Activated T-helper 1 cell treated with anti-CD3 and anti-CD28 coated beads, Interleukin-12 subunit alpha, Interleukin-12 subunit beta, Interleukin-2, Interleukin-4 antibody, amounts not matched to agents 30 ng/mL and 10 ng/mL and 1 ng/mL, durations not matched to agents 14 hours and 24 hours and 36 hours (primary cell): ENCODE measurements at regions of chr15 and their contacts with region 1.

Region 1: DNA sequence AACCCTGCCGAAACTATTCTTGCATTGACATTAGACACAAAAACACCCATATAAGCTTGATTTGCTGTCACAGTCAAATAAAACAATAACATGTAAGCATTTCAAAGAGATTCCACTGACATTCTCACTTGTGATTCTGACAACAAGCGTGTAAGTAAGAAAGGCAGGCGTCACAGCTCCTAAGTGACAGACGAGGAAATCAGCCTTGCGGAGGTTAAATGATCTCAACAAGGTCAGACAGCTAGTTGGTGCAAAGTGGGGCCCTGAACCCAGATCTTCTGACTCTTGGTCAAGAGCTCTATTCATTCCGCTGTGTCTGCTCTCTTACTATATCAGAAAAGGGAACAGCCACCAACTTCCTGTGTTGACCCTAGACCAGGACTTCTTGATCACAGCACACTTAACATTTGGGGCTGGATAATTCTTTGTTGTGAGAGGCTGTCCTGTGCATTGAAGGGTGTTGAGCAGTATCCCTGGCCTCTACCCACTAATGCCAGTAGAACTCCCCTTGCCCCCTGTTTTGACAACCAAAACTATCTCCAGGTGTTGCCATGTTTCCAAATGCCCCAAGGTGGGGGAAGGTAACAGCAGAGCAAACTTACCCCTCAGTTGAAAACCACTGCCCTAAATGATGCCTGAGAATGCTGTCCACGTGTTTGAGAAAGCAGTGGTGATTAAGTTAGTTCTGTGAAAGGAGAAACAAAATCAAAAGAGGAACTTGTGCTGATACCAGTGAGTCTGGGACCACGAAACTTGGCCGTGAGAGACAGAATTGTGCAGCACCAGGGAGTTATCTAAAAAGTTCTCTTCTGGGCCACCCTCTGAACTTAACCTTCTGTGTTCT is 86.1 kb downstream of the LIPC start:
- DNase-seq: no peak
- H3K4me3 Mint-ChIP-seq: peak overlapping the region; percentile 28
- H3K27ac Mint-ChIP-seq: peak overlapping the region; percentile 86
- H3K4me1 Mint-ChIP-seq: peaks cover 85% of the 10 kb centered on the region
- H3K27me3 Mint-ChIP-seq: no peaks in the 10 kb centered on the region

Region 2: DNA sequence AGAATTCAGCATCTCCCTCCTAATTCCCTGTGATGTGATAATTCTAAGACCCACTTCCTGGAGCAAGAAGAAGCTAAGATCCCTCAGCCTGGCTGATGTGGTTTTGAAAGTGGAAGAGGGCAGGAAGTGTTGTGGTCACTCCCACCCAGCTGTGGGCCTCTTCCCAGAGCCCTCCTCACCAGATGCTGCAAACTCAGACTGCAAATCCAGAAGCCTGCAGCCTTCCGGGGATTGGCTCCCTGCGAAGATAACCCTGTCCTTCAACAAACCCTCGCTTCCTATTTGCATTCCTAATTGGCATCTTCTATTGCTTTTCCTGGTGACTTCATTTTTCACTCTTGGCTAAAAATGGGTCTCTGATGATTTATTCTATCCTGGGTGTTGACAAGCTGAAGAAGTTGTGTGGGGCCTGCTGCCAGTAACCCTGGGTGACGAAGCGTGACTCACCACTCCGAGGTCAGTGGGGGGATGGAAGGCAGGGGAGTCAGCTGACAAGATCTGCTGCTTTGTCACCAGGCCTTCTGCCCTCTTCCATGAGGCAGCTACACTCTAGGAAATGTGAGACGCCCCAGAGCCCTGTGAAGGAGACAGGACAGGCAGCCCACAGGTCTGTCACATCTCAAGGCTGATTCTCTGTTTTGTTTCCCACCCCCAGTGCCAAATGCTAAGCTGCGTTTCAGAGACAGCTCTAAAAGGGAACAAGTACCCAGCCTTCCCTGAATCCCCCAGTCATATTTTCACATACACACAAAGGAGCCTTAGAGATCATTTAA is 185.8 kb before region 1 on chr15:
- intact Hi-C with region 1: loop called (anchors 5 kb)
- DNase-seq: peak; percentile 84
- H3K4me3 Mint-ChIP-seq: peak overlapping the region; percentile 43
- H3K27ac Mint-ChIP-seq: peak overlapping the region; percentile 95
- H3K4me1 Mint-ChIP-seq: peaks cover 44% of the 10 kb centered on the region
- H3K27me3 Mint-ChIP-seq: no peaks in the 10 kb centered on the region

Region 3: GRCh38 chr15:58457381-58457965 is 60.4 kb before region 1 on chr15:
- intact Hi-C with region 1: loop called (anchors 1 kb)
- DNase-seq: peak; percentile 26
- H3K4me3 Mint-ChIP-seq: peak overlapping the region; percentile 29
- H3K27ac Mint-ChIP-seq: peak overlapping the region; percentile 84
- H3K4me1 Mint-ChIP-seq: peaks cover 87% of the 10 kb centered on the region
- H3K27me3 Mint-ChIP-seq: no peaks in the 10 kb centered on the region

Region 4: GRCh38 chr15:58484791-58485600 is 32.9 kb before region 1 on chr15:
- intact Hi-C with region 1: loop called (anchors 1 kb)
- DNase-seq: peak; percentile 55
- H3K4me3 Mint-ChIP-seq: peak overlapping the region; percentile 56
- H3K27ac Mint-ChIP-seq: peak overlapping the region; percentile 99
- H3K4me1 Mint-ChIP-seq: peaks cover 51% of the 10 kb centered on the region
- H3K27me3 Mint-ChIP-seq: no peaks in the 10 kb centered on the region

Region 5: DNA sequence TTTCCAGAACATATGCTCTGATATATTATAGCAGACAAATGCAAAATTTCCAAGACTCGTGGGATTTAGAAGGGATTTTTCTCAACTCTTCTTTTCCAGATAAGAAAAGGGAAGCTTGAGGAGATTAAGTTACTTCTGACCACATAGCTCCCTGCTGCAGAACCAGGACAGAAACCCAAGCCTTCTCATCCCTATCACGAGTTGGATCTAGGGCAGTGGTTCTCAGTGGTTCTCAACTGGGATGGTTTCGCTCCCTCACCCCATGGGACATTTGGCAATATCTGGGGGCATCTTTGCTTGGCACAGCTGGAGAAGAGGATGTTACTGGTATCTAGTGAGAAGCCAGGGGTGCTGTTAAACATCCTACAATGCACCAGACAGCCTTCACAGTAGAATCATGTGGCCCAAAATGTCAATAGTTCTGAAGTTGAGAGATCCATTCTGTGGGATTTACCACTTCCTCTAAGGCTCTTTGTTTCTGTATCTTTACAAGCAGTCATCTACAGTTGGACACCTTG is 22.0 kb before region 1 on chr15:
- intact Hi-C with region 1: no loop called
- DNase-seq: no peak
- H3K4me3 Mint-ChIP-seq: no peak overlapping the region
- H3K27ac Mint-ChIP-seq: peak overlapping the region; percentile 18
- H3K4me1 Mint-ChIP-seq: peaks cover 66% of the 10 kb centered on the region
- H3K27me3 Mint-ChIP-seq: no peaks in the 10 kb centered on the region

Region 6: DNA sequence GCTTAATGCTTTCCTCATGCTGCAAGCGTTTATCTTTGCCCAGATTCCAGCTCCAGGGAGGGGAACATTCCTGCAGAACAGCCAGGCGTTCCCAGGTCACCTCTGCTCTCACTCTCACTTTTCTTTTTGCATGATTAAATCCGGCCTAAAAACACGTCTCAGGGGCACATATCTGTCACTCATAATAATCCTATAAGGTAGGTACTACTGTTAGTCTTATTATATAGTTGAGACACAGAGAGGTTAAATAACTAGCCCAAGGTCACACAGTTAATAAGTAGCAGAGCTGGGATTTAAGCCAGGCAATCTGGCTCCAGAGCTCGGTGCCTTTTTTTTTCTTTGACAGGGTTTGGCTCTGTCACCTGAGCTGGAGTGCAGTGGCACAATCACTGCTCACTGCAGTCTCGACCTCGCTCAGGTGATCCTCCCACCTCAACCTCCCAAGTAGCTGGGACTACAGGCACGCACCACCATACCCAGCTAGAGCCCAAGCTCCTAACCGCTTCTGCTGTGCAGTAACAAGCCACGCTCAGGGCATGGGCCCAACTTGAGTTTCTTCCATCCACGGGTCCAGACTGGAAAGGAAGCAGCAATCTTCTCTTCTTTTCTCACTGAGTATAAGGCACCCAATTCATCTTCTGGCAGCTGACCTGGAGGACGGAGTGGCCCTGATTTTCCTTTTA is 10.4 kb after region 1 on chr15:
- intact Hi-C with region 1: no loop called
- DNase-seq: no peak
- H3K4me3 Mint-ChIP-seq: no peak overlapping the region
- H3K27ac Mint-ChIP-seq: no peak overlapping the region
- H3K4me1 Mint-ChIP-seq: peaks cover 6% of the 10 kb centered on the region
- H3K27me3 Mint-ChIP-seq: no peaks in the 10 kb centered on the region

Region 7: DNA sequence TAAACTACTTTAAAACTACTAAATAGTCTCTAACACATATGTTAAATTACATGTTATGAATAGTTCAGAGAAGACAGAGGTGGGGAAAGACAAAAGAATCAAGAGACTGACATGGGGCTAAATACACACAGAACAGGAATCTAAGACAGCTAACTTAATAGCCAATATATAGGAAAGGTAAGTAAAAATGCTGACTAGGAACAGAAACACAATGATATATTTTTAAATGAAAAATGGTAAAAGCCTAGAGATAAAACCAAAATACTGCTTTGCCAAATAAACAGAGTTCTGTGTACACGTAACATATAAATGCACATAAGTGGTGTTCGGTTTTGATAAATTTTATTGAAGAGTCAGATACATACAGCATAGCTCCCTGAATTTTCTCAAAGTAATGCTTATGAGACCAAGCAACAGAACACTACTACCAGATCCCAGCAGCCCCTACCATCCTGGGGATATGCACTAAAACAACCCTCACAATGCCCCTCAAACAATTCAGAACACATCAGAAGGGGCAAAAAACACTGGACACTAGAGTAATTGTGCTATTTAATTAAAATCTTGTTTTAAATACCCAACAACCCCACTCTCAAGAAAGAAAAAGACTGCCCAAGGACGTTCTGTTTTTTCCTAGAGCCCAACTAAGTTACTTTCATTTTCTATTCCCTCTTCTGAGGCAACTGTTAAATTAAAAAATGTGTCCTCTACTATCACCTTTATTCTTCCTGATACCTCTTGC is 110.5 kb after region 1 on chr15:
- intact Hi-C with region 1: loop called (anchors 5 kb)
- DNase-seq: no peak
- H3K4me3 Mint-ChIP-seq: peak overlapping the region; percentile 80
- H3K27ac Mint-ChIP-seq: peak overlapping the region; percentile 86
- H3K4me1 Mint-ChIP-seq: peaks cover 55% of the 10 kb centered on the region
- H3K27me3 Mint-ChIP-seq: no peaks in the 10 kb centered on the region

Region 8: GRCh38 chr15:58770857-58771620 is 253.1 kb after region 1 on chr15 and contains the start of gene MINDY2:
- intact Hi-C with region 1: loop called (anchors 1 kb)
- DNase-seq: peak; percentile 94
- H3K4me3 Mint-ChIP-seq: no peak within 1 kb of the TSS
- H3K27ac Mint-ChIP-seq: peak within 1 kb of the TSS; percentile 88
- H3K4me1 Mint-ChIP-seq: peaks cover 9% of the 10 kb centered on the region
- H3K27me3 Mint-ChIP-seq: no peaks in the 10 kb centered on the region
- total RNA-seq, gene MINDY2: 9.0 and 9.7 TPM in 2 replicates